ENCODE measurements at regions of chr13 and their contacts with region 1.

Region 1: DNA sequence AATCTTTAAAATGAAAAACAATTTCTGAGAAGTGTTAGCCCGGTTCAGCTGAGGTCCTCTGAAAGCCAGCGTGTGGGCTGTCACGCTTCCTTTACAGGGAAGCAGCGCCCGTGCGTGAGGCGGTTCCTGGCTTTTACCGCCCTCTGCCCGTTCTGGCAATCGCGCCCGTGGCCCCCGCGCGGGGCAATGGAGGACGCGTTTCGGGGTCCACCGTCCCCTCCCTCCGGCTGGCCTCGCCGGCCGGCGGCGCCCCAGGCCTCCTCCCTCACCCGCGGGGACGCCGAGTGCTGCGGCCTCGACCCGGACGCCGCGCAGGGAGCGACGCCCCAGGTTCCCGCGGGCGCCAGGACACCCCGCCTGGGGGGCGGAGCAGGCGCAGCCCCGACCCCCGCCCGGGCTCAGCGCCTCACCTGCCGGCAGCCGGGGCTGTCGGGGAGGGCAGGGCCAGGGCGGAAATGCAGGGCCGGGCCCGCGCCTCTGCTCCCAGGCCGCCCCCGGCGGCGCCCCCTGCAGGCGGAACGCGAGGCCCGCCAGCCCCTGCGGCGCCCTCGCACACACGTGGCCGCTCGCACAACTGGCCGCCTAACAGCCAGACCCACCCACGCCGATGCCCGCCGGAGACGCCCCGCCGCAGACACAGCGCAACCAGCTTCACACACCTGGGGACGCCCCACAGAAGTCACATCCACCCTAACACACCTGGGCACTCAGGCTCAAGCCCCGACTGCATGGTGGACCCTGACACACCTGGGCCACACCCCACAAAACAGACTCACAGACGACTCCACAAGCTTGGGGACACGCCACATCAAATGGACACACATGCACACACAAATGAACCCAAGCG is at the start of gene GGACT:
- DNase-seq: peak; percentile 74
- H3K4me3 ChIP-seq: peak within 1 kb of the TSS; percentile 40 to 88 (median 71)
- H3K27ac ChIP-seq: peak within 1 kb of the TSS; percentile 56 to 83 (median 74)
- H3K4me1 ChIP-seq: peaks cover 0 to 18% (median 6%) of the 10 kb centered on the region in 4 donors
- H3K27me3 ChIP-seq: no peaks in the 10 kb centered on the region
- CTCF ChIP-seq: peak in 2 of 4 experiments; percentile 35 to 84
- EP300 ChIP-seq: no peak
- POLR2A ChIP-seq: no peak
- total RNA-seq, gene GGACT: 0.99 to 2.2 (median 1.9) TPM

Region 2: DNA sequence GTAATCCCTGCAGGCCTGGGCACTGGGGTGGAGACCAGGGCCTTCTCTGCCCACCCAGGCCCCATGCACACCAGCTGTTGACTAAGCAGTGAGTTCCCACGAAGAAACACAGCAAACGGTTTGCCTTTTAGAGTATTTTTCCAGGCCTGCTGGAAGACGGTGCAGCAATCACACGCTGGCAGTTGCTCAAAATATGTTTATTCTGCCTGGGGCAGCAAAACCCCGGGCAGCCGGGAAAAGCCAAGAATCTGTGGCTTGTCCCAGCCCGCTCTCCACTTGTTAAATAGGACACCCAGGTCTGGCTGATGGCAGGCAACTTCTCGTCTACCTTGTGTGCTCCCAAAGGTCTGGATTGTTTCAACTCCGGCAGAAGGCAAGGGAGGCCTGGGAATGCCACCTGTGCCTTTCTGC is 40.8 kb before region 1 on chr13:
- intact Hi-C with region 1: loop called (anchors 5 kb)
- DNase-seq: no peak
- H3K4me3 ChIP-seq: no peak overlapping the region
- H3K27ac ChIP-seq: peak overlapping the region in 3 of 4 donors; percentile 71 to 78 (median 76)
- H3K4me1 ChIP-seq: peaks cover 2 to 47% (median 28%) of the 10 kb centered on the region in 4 donors
- H3K27me3 ChIP-seq: no peaks in the 10 kb centered on the region
- CTCF ChIP-seq: no peak
- EP300 ChIP-seq: no peak
- POLR2A ChIP-seq: no peak

Measured in sigmoid colon (tissue), 7 donors.